KBM-7 (cell line): ENCODE measurements at regions of chr2 and their contacts with region 1.

Region 1: DNA sequence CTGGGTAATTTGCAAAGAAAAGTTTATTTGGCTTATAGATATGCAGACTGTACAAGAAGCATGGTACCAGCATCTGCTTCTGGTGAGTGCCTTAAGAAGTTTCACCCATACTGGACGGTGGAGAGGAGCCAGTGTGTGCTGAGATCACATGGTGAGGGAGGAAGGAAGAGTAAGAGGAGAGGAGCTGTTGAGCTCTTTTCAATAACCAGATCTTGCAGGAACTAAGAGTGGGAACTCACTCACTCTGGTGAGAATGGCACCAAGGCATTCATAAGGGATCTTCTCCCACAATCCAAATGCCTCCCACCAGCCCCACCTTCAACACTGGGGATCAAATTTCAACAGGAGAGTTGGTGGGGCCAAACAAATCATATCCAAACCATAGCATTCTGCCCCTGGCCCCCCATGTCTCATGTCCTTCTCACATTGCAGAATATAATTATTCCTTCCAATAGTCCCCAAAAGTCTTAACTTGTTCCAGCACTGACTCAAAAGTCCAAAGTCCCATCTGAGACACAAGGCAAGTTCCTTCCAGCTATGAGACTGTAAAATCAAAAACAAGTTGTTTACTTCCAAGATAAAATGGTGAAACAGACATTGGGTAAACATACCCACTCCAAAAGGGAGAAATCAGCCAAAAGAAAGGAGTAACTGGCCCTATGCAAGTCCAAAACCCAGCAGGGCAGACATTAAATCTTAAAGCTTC is 11.7 kb upstream of the TMEM37 start:
- DNase-seq: no peak

Region 2: GRCh38 chr2:118986738-118987137 is 433.2 kb before region 1 on chr2:
- in situ Hi-C with region 1: no loop called
- DNase-seq: no peak

Region 3: GRCh38 chr2:119301413-119301812 is 118.5 kb before region 1 on chr2:
- in situ Hi-C with region 1: no loop called
- DNase-seq: no peak

Region 4: GRCh38 chr2:119476301-119477021 is 56.5 kb after region 1 on chr2:
- in situ Hi-C with region 1: loop called (anchors 10 kb)
- DNase-seq: peak; percentile 68

Region 5: DNA sequence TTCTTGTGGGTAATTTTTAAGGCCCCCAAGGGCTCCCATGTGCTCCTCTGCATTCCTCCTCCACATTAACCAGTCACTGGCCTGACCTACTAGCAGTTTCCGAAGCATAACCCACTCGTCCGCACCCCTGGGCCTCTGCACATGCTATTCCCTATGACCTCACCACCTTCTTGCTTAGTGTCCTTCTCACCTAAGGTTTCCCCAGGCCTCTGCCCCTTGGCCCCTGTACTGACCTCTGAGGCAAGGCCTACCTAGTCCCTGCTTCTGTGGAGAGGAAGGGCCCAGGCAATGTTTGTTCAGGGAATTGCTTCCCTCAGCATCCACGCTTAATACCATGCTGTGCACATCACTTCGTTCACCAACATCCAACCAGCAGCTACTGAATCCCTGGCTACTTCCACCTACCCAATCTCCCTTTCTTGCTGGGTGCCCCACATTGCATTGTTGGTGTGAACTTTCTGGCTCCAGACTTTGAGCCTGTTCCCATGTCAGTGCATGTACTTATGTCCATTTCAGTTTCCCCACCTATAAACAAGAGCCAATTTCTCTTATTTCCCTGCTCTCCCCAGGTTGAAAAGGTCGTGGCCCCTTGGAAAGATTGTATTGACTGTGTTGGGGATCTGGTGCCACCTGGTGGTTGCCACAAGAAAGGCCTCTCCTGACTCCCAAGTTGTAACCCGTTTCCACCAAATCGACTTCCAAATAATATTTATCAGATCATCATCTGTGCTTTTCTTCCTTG is 239.8 kb after region 1 on chr2:
- in situ Hi-C with region 1: no loop called
- DNase-seq: peak; percentile 48